ENCODE measurements at regions of chr3 and their contacts with region 1.

Region 1: DNA sequence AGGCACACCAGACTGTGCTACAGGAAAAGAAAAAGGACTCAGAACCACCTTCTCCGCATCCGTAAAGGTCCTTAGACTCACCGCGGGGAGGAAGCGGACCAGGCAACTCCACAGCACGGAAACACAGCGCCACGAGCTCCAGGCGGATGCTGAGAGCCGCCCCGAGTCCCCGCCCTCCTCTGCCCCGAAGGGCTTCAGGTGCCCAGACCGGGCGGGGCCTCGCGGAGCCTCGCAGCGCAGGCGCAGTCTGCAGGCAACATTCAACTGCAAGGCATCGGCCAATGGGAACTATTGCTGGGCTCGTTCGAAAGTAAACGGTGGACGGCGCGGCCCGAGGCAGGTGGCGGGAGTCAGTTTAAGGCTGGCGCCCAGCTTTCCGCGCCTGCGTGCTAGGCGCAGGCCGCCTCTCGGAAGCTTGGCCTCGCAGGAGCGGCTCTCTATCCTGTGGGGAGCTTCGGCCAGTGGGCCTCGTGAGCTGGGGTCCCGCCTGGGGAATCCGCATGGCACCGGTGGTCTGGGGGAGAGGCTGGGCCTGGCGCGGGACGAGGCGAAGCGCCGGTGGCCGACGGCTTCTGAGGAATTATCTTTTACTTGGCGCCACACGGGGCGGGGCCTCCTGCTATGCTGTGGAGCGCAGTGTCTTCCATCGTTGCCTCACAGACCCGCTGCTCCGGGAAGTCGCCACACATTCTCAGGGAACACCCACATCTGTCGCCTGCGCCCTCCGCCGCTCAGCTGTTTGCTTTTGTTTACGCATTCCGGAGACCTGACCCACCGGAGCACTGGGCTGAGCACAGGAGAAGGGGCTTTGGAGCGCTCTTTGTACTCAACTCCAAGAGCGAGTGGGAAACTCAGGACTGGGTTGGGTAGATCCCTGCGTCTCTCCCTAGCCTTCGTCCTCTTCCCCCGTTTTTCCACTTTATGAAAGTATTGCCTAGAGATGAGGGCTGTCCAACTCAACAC is at the start of gene TRIM59:
- DNase-seq: peak; percentile 85 to 94
- H3K4me3 ChIP-seq: peak within 1 kb of the TSS; percentile 68 to 74
- H3K27ac ChIP-seq: peak within 1 kb of the TSS; percentile 75 to 78
- H3K4me1 ChIP-seq: peaks cover 3 to 5% of the 10 kb centered on the region in 2 donors
- H3K27me3 ChIP-seq: no peaks in the 10 kb centered on the region
- CTCF ChIP-seq: peak in 1 of 3 experiments; percentile 4
- total RNA-seq, gene TRIM59: not detected

Region 2: GRCh38 chr3:160399125-160400029 is 50.5 kb before region 1 on chr3 and contains the starts of genes IFT80 and SMC4:
- intact Hi-C with region 1: loop called (anchors 2 kb)
- DNase-seq: peak; percentile 79 to 98
- H3K4me3 ChIP-seq: peak within 1 kb of the TSS; percentile 64 to 73
- H3K27ac ChIP-seq: peak within 1 kb of the TSS; percentile 84 to 87
- H3K4me1 ChIP-seq: peaks cover 0 to 8% of the 10 kb centered on the region in 2 donors
- H3K27me3 ChIP-seq: no peaks in the 10 kb centered on the region
- CTCF ChIP-seq: no peak
- total RNA-seq, gene IFT80: 10.2 TPM
- total RNA-seq, gene SMC4: 5.0 TPM

Region 3: DNA sequence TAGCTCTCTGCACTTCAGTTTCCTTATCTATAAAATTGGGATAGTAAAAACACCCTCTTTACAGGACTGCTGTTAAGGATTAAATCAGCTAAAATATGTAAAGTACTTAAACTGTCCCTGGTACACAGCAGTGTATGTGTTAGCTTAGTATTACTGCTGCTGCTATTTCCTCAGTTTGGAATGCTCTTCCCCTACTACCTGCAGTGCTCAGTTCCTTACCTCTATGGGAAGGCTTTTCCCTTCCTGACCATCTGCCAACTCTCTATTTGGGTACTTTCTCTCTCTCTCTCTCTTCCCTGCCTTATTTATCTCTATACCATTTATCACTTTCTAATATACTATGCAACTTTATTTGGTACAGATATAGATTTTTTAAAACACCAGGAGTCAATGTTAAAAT is 89.0 kb after region 1 on chr3:
- intact Hi-C with region 1: no loop called
- DNase-seq: no peak
- H3K4me3 ChIP-seq: no peak overlapping the region
- H3K27ac ChIP-seq: no peak overlapping the region
- H3K4me1 ChIP-seq: no peaks in the 10 kb centered on the region
- H3K27me3 ChIP-seq: no peaks in the 10 kb centered on the region
- CTCF ChIP-seq: no peak